ENCODE measurements at regions of chr5 and their contacts with region 1.

Region 1: GRCh38 chr5:102961671-102962070 is 158.3 kb downstream of the GIN1 start:
- DNase-seq: no peak
- H3K4me3 ChIP-seq: no peak overlapping the region
- H3K27me3 ChIP-seq: no peaks in the 10 kb centered on the region
- CTCF ChIP-seq: no peak

Region 2: DNA sequence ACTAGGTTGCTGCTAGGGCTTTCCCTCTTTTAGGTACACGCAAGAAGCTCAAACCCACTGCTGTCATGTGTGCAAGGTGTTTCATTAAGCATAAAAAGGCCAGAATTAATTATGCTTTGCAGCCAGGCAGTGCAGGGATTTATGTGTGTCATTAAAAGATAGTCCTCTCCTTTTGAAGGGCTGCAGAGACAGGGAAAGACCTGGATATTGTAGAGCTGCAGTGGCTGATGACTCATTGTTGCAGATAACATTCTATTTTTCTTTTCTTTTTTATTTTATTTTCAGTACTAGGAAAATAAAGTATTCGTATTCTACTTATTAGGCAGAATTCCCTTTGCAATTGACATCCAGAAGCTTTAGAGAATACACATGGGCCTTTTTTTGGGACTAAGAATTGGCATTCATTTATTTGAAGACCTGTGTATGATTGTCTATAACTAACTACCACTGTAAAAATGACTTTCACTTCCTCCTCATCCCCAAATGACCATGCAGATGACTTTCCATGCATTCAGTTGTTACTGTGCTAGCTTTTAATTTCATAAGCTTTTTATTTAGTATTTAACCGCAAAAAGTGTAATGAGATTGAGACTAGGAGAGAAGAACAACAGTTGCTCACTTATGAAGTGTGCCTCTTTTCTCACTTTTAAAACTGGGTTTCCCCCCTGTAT is 93.5 kb before region 1 on chr5:
- CTCF ChIA-PET with region 1: no interaction called
- POLR2A ChIA-PET with region 1: no interaction called
- DNase-seq: no peak
- H3K4me3 ChIP-seq: no peak overlapping the region; the same call in 1 of the 2 replicates
- H3K27me3 ChIP-seq: no peaks in the 10 kb centered on the region
- CTCF ChIP-seq: no peak

Region 3: DNA sequence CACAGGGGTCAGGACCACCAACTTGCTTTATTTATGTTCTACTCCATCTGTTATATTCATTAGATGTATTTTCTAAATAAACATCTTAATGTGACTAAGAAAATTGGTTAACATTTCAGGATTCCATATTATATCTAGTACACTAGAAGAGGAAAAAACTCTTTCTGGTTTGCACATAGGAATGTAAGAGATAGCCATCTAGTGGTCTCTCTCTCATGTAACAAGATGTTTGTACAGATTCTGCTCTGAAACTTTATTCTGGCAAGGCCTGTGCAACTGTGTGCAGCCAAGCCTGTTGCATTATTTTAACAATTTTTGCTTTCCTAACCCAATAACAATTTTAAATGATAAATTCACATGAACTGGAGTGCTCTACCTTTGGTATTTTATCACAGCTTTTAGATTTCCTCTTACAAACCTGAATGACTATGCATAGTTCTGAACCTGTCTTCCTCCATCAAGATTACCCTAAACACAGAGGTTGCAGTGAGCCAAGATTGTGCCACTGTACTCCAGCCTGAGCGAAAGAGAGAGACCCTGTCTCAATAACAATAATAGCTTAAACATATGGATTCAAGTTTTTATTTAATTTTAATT is 10.1 kb after region 1 on chr5:
- CTCF ChIA-PET with region 1: interaction called, 11 read pairs
- POLR2A ChIA-PET with region 1: no interaction called
- DNase-seq: peak; percentile 4
- H3K4me3 ChIP-seq: no peak overlapping the region
- H3K27me3 ChIP-seq: no peaks in the 10 kb centered on the region
- CTCF ChIP-seq: peak; percentile 63

Measured in BJ (cell line).